Colonic mucosa (tissue), 4 donors: ENCODE measurements at regions of chr14 and their contacts with region 1.

Region 1: GRCh38 chr14:104639889-104640548 is 35.4 kb upstream of the TMEM179 start:
- DNase-seq: peak; percentile 57
- H3K4me3 ChIP-seq: no peak overlapping the region
- H3K27ac ChIP-seq: no peak overlapping the region
- H3K4me1 ChIP-seq: no peaks in the 10 kb centered on the region
- H3K27me3 ChIP-seq: no peaks in the 10 kb centered on the region
- CTCF ChIP-seq: peak; percentile 88

Region 2: DNA sequence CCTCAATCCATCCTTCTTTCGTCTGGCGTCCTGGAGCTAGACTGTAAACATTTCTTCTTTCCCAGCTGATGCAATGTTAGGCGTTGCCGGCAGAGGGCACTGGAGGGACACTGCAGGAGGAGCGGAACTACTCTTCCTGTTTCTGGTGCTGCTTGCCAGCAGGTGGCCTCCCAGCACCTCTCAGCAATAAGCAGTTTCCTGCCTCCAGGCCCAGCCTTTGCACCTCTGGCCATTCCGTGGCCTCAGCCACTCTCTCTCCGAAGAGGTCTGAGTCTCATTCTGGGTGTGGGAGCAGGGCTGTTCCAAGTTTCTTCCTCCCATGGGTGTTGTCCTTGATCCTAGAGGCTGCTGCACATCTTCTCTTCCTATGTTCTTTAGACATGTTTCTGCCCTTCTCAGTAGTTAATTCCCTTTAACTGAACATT is 562.0 kb before region 1 on chr14:
- intact Hi-C with region 1: loop called (anchors 5 kb)
- DNase-seq: peak; percentile 92
- H3K4me3 ChIP-seq: no peak overlapping the region
- H3K27ac ChIP-seq: no peak overlapping the region
- H3K4me1 ChIP-seq: peaks cover 19% of the 10 kb centered on the region
- H3K27me3 ChIP-seq: no peaks in the 10 kb centered on the region
- CTCF ChIP-seq: peak; percentile 99